ENCODE measurements at regions of chr1 and their contacts with region 1.

Region 1: DNA sequence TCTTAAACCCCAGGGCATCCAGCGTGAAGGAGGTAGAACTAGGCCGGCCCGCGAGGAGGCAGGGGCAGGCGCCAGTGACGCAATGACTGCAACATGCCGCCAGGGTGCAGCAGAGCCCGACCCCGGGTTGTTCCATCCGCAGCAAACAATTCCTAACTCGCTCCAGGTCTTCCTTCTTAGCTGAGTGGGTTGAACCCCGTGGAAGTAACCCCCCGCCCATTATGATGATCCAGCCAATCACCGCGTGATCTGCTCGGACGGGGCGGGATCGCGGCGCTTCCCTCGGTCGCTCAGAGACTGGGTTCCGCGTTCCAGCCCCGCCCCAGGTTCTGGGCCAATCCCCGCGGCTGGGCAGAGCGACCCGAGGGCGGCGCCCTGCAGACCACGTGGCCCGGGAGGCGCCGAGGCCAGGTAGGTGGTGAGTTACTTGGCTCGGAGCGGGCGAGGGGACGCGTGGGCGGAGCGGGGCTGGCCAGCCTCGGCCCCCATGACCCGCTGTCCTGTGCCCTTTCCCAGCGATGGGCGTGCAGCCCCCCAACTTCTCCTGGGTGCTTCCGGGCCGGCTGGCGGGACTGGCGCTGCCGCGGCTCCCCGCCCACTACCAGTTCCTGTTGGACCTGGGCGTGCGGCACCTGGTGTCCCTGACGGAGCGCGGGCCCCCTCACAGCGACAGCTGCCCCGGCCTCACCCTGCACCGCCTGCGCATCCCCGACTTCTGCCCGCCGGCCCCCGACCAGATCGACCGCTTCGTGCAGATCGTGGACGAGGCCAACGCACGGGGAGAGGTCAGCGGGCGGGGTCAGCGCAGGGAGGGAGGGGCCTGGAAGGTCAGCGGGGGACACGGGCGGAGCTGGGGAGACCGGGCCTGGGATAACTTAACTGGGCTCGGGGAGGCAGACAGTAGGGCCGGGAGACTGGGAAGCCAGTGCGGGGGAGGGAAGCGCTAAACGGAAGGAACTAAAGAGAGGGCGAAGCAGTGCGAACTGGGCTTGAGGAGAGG is at the start of gene DUSP23:
- DNase-seq: peak; percentile 90 to 99
- H3K4me3 ChIP-seq: peak within 1 kb of the TSS; percentile 73 to 94
- H3K27ac ChIP-seq: peak within 1 kb of the TSS; percentile 73 to 79
- H3K4me1 ChIP-seq: peaks cover 3 to 14% of the 10 kb centered on the region in 2 donors
- H3K27me3 ChIP-seq: no peaks in the 10 kb centered on the region
- CTCF ChIP-seq: peak; percentile 92 to 95 (median 93)
- total RNA-seq, gene DUSP23: 549 TPM

Region 2: GRCh38 chr1:159891275-159892157 is 110.6 kb after region 1 on chr1:
- intact Hi-C with region 1: loop called (anchors 1 kb)
- DNase-seq: peak; percentile 65 to 90
- H3K4me3 ChIP-seq: no peak overlapping the region
- H3K27ac ChIP-seq: peak overlapping the region in 1 of 2 donors; percentile 68
- H3K4me1 ChIP-seq: peaks cover 6 to 10% of the 10 kb centered on the region in 2 donors
- H3K27me3 ChIP-seq: no peaks in the 10 kb centered on the region
- CTCF ChIP-seq: peak; percentile 97 to 99 (median 97)

Region 3: DNA sequence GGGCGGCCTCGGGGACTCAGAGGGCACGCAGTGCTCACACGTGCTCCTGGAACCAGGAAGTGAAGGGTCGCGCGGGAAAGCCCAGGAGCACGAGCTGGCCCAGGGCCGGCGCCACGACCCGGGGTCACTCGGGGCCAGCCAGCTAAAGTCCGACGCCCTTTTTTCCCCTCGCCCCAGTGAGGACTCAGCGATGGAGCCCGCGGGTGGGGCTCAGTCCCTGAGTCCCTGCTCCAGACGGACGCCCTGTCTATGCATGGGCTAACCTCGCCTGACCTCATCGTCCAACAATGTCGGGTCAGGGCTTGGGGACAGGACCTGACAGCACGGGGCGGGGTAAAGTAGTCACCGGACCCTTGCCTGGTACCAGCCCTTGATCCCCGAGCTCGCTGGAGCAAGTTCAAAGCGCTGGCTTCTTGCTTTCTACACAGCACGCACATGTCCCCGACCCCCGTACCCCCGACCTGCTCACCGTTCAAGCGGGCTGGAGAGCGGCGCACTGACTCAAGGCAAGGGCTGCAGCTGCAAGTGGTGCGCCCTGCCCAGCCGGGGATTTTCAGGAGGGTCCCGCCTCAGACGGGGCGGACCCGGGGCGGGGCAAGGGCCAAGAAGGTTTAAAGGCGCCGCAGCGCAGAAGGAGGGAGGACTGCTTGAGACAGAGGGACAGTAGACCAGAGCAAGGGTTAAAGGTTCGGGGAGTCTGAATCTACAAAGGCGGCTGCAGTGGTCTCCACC is 144.3 kb after region 1 on chr1 and contains the start of gene TAGLN2:
- intact Hi-C with region 1: loop called (anchors 1 kb)
- DNase-seq: peak; percentile 76 to 95
- H3K4me3 ChIP-seq: peak within 1 kb of the TSS; percentile 74 to 83
- H3K27ac ChIP-seq: peak within 1 kb of the TSS; percentile 96 to 98
- H3K4me1 ChIP-seq: peaks cover 6 to 20% of the 10 kb centered on the region in 2 donors
- H3K27me3 ChIP-seq: no peaks in the 10 kb centered on the region
- CTCF ChIP-seq: no peak
- total RNA-seq, gene TAGLN2: 363 TPM

Region 4: DNA sequence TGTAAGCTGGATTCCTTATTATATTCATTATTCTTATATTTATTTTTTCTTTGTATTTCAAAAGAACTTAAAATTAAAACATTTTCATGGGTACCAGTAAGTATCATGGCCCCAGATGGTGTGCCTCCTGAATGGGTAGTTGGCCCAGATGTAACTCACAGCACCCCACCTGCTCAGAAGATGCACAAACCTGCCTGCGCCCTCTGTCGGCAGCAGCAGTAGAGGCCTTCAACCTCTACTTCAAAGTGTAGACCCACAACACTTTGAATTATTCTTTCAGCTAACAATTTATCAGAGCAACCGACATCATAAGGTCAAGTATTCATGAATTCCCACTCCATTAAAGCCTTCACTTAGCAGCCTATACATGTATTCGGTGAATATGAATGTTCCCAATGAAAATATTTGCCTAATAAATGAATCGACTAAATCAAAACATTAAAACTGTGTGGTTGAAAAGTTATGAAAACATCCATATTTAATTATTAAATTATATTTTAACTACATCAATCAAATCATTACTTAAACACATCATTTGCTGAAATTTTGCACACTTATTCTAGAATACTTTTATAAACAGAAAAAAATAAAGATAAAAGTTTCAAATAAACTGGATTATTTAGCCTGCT is 225.5 kb after region 1 on chr1:
- intact Hi-C with region 1: loop called (anchors 5 kb)
- DNase-seq: peak; percentile 23 to 69
- H3K4me3 ChIP-seq: no peak overlapping the region
- H3K27ac ChIP-seq: no peak overlapping the region
- H3K4me1 ChIP-seq: no peaks in the 10 kb centered on the region
- H3K27me3 ChIP-seq: no peaks in the 10 kb centered on the region
- CTCF ChIP-seq: peak; percentile 49 to 74 (median 54)

Region 5: DNA sequence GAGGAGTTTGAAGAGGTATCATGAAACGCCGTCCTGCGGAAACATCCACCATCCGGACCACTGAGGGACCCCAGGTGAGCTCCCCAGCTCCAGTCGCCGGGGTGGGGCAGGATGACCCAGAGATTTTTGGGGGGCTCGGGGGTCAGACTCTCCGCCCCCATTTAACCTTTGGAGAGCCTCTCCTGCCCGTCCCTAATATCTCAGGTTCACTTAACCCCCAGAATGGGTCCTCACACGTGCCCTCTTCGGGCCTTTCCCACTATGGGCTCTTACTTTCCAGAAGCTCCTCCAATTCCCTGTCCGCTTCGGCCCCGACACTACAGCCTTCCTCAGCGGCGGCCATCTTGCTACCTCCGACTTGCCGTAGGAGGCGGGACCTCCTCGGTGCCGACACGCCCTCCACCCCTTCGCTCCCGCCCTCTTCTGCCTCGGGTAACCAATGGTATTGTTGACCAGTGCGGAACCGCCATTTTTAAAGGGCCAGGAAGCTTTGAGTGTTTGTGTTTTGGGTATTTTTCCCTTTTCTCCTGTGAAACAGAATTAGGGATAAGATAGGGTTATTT is 504.0 kb after region 1 on chr1 and contains the start of gene PEX19:
- intact Hi-C with region 1: loop called (anchors 10 kb)
- DNase-seq: peak; percentile 65 to 96
- H3K4me3 ChIP-seq: peak within 1 kb of the TSS; percentile 72 to 86
- H3K27ac ChIP-seq: peak within 1 kb of the TSS; percentile 82 to 87
- H3K4me1 ChIP-seq: peaks cover 4 to 16% of the 10 kb centered on the region in 2 donors
- H3K27me3 ChIP-seq: no peaks in the 10 kb centered on the region
- CTCF ChIP-seq: no peak
- total RNA-seq, gene PEX19: 36.6 TPM

Measured in ascending aorta (tissue), 2 donors.